Activated naive CD4-positive, alpha-beta T cell treated with anti-CD3 and anti-CD28 coated beads for 36 hours (primary cell): ENCODE measurements at regions of chr2 and their contacts with region 1.

Region 1: DNA sequence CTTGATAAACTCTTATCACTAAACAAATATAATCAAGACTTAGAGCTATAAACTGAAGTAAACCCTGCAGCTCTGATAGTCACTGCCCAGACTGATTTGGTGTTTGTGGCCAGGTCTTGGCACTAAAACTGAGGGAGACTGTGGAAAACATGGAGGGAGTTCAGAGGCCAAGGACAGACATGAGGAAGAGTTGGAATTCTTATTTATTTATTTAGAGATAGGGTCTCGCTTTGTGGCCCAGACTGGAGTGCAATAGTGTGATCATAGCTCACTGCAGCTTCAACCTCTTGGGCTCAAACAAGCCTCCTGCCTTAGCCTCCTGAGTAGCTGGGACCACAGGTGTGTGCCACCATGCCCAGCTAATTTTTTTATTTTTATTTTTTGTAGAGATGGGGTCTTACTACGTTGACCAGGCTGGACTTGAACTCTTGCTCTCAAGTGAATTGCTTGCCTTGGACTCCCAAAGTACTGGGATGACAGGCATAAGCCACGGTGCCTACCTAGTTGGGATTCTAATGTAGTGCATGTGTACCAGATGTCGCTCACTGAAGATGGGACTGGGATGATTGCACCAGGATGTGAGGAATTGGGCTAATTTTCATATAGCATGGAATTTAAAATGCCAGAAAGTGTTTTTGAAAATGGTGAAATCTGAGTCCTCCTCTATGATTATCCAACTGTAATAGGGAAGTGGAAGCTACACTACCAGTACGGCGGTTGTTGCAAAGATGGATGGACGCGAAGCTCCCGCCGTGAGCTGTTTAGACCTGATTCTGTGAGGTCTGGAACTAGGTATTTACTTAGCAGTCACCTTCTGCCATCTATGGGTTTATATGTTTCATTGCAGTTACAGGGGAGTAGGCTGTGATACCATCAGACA is 52.7 kb upstream of the CTLA4 start:
- DNase-seq: peak; percentile 77
- H3K4me3 Mint-ChIP-seq: peak overlapping the region; percentile 54
- H3K27ac Mint-ChIP-seq: no peak overlapping the region
- H3K4me1 Mint-ChIP-seq: peaks cover 54% of the 10 kb centered on the region
- H3K27me3 Mint-ChIP-seq: no peaks in the 10 kb centered on the region

Region 2: DNA sequence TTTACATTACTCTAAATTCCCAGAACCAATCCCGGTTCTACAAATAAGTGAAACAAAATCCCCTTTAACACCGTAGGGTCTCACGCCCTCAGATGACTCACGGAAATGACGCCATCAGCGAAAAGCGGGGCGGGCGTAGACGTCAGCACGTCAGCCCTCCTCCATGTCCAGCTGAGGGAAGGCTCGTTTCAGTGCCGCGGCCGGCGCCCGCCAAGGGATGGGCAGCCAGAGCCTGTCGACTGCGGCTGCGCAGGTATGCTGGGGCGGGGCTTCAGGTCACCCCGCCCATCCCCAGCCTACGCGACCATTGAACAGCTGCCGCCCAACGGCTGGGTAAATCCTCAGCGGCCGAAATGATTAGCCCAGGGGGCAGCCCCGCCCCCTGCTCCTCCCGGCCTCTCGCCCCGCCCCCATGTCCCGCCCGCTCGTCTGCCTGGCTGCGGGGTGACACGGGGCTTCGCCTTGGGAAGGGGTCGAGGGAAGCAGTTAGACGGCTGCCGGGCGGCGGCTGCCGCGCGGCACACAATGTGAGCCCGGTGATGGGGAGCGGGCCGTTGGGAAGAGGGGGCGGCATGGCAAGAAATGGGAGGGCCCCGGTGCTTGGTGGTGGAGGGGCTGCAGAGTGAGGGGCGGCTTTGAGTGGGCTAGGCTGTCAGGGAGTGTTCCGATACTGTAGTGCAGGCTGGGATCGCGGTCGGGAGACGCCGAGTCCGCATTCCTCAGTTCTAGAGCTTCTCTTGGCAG is 800.3 kb before region 1 on chr2 and contains the start of gene NBEAL1:
- CTCF ChIA-PET with region 1: no interaction called
- intact Hi-C with region 1: loop called (anchors 5 kb)
- DNase-seq: peak; percentile 97
- H3K4me3 Mint-ChIP-seq: peak within 1 kb of the TSS; percentile 95
- H3K27ac Mint-ChIP-seq: peak within 1 kb of the TSS; percentile 74
- H3K4me1 Mint-ChIP-seq: peaks cover 27% of the 10 kb centered on the region
- H3K27me3 Mint-ChIP-seq: no peaks in the 10 kb centered on the region
- total RNA-seq, gene NBEAL1: 7.9 to 8.3 TPM

Region 3: GRCh38 chr2:203453858-203454451 is 360.9 kb before region 1 on chr2:
- CTCF ChIA-PET with region 1: interaction called, 16 read pairs
- intact Hi-C with region 1: loop called (anchors 1 kb)
- DNase-seq: peak; percentile 54
- H3K4me3 Mint-ChIP-seq: no peak overlapping the region
- H3K27ac Mint-ChIP-seq: no peak overlapping the region
- H3K4me1 Mint-ChIP-seq: peaks cover 2% of the 10 kb centered on the region
- H3K27me3 Mint-ChIP-seq: no peaks in the 10 kb centered on the region

Region 4: DNA sequence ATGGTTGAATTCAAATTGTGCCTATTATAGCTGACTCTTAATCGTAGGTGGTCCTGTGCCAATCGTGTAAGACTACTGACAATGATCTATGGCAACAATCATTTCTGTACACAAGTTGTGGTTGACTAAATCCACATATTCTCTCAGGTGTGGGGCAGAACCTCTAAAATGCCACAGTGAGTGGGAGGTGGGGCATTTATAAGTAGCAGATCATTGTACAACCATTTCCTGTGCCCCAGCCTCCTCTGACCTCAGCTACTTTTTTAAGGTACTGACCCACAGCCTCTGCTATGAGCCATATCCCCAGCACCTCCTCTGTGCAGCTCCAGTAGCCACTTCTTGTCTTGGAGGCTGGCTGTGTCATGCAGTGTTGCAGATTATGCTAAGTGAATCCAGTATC is 231.2 kb before region 1 on chr2:
- CTCF ChIA-PET with region 1: no interaction called
- intact Hi-C with region 1: no loop called
- DNase-seq: peak; percentile 26
- H3K4me3 Mint-ChIP-seq: no peak overlapping the region
- H3K27ac Mint-ChIP-seq: no peak overlapping the region
- H3K4me1 Mint-ChIP-seq: peaks cover 19% of the 10 kb centered on the region
- H3K27me3 Mint-ChIP-seq: no peaks in the 10 kb centered on the region

Region 5: GRCh38 chr2:203706403-203706802 is 108.5 kb before region 1 on chr2 and contains the start of gene CD28:
- CTCF ChIA-PET with region 1: interaction called, 3 read pairs
- intact Hi-C with region 1: loop called (anchors 1 kb)
- DNase-seq: peak; percentile 97
- H3K4me3 Mint-ChIP-seq: peak within 1 kb of the TSS; percentile 89
- H3K27ac Mint-ChIP-seq: peak within 1 kb of the TSS; percentile 93
- H3K4me1 Mint-ChIP-seq: peaks cover 37% of the 10 kb centered on the region
- H3K27me3 Mint-ChIP-seq: no peaks in the 10 kb centered on the region
- total RNA-seq, gene CD28: 165 to 167 TPM

Region 6: DNA sequence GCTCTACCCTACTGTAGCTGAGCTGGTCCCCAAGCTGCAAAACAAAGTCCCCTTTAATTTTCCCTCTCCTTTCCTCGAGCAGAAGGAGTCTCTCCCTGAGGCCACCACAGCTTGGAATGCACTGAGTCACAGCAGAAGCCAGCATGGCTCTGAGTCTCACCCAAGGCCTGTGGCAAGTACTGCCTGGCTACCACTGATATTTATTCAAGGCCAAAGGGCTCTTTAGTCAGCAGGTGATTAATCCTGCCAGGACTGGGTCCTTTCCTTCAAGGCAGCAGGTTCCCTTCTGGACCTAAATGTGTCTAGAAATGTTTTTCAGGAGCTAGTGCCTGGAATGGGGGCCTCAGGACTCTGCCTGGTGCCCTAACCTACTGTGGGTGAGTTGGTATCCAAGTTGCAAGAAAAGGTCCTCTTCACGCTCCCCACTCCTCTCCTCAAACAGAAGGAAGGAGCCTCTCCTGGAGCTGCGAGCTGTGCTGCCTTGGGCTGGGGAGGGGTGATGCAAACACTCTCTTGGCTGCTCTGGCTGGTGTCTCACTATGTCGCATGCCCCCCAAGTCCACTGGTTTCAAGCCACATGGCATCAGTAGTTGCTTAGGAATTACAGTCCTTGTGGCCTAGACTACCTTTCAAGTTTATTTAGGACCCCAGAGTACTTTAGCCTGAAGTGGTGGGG is 55.1 kb before region 1 on chr2:
- CTCF ChIA-PET with region 1: interaction called, 4 read pairs
- intact Hi-C with region 1: loop called (anchors 1 kb)
- DNase-seq: no peak
- H3K4me3 Mint-ChIP-seq: no peak overlapping the region
- H3K27ac Mint-ChIP-seq: no peak overlapping the region
- H3K4me1 Mint-ChIP-seq: peaks cover 59% of the 10 kb centered on the region
- H3K27me3 Mint-ChIP-seq: no peaks in the 10 kb centered on the region

Region 7: GRCh38 chr2:203871371-203871983 is 56.6 kb after region 1 on chr2:
- CTCF ChIA-PET with region 1: interaction called, 12 read pairs
- intact Hi-C with region 1: loop called (anchors 1 kb)
- DNase-seq: peak; percentile 69
- H3K4me3 Mint-ChIP-seq: peak overlapping the region; percentile 92
- H3K27ac Mint-ChIP-seq: peak overlapping the region; percentile 99
- H3K4me1 Mint-ChIP-seq: peaks cover 55% of the 10 kb centered on the region
- H3K27me3 Mint-ChIP-seq: no peaks in the 10 kb centered on the region

Region 8: DNA sequence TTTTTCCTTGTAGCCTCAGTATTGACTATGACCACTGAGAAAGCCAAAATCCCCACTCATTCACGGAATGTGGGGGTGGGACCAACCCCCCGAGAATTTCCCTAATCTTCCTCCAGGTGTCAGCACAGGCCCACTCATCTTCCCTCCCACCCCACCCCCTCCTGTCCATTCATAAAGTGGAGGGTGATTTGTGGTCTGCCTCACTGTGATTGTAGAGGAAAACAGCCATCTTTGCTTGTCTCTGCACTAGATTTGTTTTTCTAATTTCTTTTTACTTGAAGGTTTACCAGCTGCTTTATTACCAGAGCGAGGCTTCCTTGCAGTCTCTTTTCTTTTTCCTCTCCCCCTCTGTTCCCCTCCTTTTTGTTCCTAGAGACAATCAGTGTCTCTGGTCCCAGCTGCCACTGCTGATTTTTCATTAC is 293.4 kb after region 1 on chr2:
- CTCF ChIA-PET with region 1: no interaction called
- intact Hi-C with region 1: no loop called
- DNase-seq: peak; percentile 72
- H3K4me3 Mint-ChIP-seq: peak overlapping the region; percentile 71
- H3K27ac Mint-ChIP-seq: peak overlapping the region; percentile 96
- H3K4me1 Mint-ChIP-seq: peaks cover 75% of the 10 kb centered on the region
- H3K27me3 Mint-ChIP-seq: peaks cover 2% of the 10 kb centered on the region